Activated T-helper 2 cell treated with anti-CD3 and anti-CD28 coated beads, Interferon-gamma antibody, Interleukin-2, Interleukin-4, amounts not matched to agents 10 μg/mL and 5 μg/mL and 100 μg/mL, durations not matched to agents 14 hours and 24 hours and 36 hours (primary cell): ENCODE measurements at regions of chr1 and their contacts with region 1.

Region 1: GRCh38 chr1:89065079-89065868 is at the start of gene GBP1:
- DNase-seq: no peak
- H3K4me3 Mint-ChIP-seq: peak within 1 kb of the TSS; percentile 81
- H3K27ac Mint-ChIP-seq: peak within 1 kb of the TSS; percentile 86
- H3K4me1 Mint-ChIP-seq: peaks cover 59% of the 10 kb centered on the region
- H3K27me3 Mint-ChIP-seq: no peaks in the 10 kb centered on the region
- total RNA-seq, gene GBP1: 35.3 and 40.0 TPM in 2 replicates

Region 2: GRCh38 chr1:89022167-89022959 is 42.9 kb before region 1 on chr1 and contains the start of gene GBP3:
- intact Hi-C with region 1: loop called (anchors 2 kb)
- DNase-seq: no peak
- H3K4me3 Mint-ChIP-seq: peak within 1 kb of the TSS; percentile 93
- H3K27ac Mint-ChIP-seq: peak within 1 kb of the TSS; percentile 79
- H3K4me1 Mint-ChIP-seq: peaks cover 46% of the 10 kb centered on the region
- H3K27me3 Mint-ChIP-seq: no peaks in the 10 kb centered on the region
- total RNA-seq, gene GBP3: 6.4 and 7.5 TPM in 2 replicates

Region 3: GRCh38 chr1:89047734-89048133 is 17.5 kb before region 1 on chr1:
- intact Hi-C with region 1: loop called (anchors 2 kb)
- DNase-seq: no peak
- H3K4me3 Mint-ChIP-seq: no peak overlapping the region
- H3K27ac Mint-ChIP-seq: no peak overlapping the region
- H3K4me1 Mint-ChIP-seq: peaks cover 6% of the 10 kb centered on the region
- H3K27me3 Mint-ChIP-seq: no peaks in the 10 kb centered on the region